CD8-positive, alpha-beta T cell (primary cell): ENCODE measurements at regions of chr9 and their contacts with region 1.

Region 1: GRCh38 chr9:136991993-136992818 is at the start of gene PAXX:
- DNase-seq: peak; percentile 84 to 96 (median 93)
- ATAC-seq: peak; percentile 82
- H3K4me3 ChIP-seq: peak within 1 kb of the TSS; percentile 79 to 84
- H3K4me3 Mint-ChIP-seq: peak within 1 kb of the TSS; percentile 88
- H3K27ac ChIP-seq: peak within 1 kb of the TSS; percentile 69 to 88
- H3K27ac Mint-ChIP-seq: peak within 1 kb of the TSS; percentile 95
- H3K4me1 ChIP-seq: peaks cover 35% of the 10 kb centered on the region
- H3K4me1 Mint-ChIP-seq: peaks cover 34% of the 10 kb centered on the region
- H3K27me3 ChIP-seq: no peaks in the 10 kb centered on the region
- H3K27me3 Mint-ChIP-seq: peaks cover 4% of the 10 kb centered on the region
- CTCF ChIP-seq: no peak
- total RNA-seq, gene PAXX: 101 to 111 TPM

Region 2: GRCh38 chr9:136849038-136849959 is 142.9 kb before region 1 on chr9 and contains the start of gene PHPT1:
- CTCF ChIA-PET with region 1: interaction called, 4 read pairs
- POLR2A ChIA-PET with region 1: no interaction called
- intact Hi-C with region 1: loop called (anchors 1 to 5 kb)
- DNase-seq: peak; percentile 91 to 98 (median 96)
- ATAC-seq: peak; percentile 92
- H3K4me3 ChIP-seq: peak within 1 kb of the TSS; percentile 77 to 99
- H3K4me3 Mint-ChIP-seq: peak within 1 kb of the TSS; percentile 93
- H3K27ac ChIP-seq: peak within 1 kb of the TSS; percentile 47 to 68
- H3K27ac Mint-ChIP-seq: peak within 1 kb of the TSS; percentile 88
- H3K4me1 ChIP-seq: peaks cover 29% of the 10 kb centered on the region
- H3K4me1 Mint-ChIP-seq: peaks cover 15% of the 10 kb centered on the region
- H3K27me3 ChIP-seq: peaks cover 3 to 11% of the 10 kb centered on the region in 2 experiments
- H3K27me3 Mint-ChIP-seq: peaks cover 9% of the 10 kb centered on the region
- CTCF ChIP-seq: no peak
- total RNA-seq, gene PHPT1: 15.7 to 17.1 TPM

Region 3: DNA sequence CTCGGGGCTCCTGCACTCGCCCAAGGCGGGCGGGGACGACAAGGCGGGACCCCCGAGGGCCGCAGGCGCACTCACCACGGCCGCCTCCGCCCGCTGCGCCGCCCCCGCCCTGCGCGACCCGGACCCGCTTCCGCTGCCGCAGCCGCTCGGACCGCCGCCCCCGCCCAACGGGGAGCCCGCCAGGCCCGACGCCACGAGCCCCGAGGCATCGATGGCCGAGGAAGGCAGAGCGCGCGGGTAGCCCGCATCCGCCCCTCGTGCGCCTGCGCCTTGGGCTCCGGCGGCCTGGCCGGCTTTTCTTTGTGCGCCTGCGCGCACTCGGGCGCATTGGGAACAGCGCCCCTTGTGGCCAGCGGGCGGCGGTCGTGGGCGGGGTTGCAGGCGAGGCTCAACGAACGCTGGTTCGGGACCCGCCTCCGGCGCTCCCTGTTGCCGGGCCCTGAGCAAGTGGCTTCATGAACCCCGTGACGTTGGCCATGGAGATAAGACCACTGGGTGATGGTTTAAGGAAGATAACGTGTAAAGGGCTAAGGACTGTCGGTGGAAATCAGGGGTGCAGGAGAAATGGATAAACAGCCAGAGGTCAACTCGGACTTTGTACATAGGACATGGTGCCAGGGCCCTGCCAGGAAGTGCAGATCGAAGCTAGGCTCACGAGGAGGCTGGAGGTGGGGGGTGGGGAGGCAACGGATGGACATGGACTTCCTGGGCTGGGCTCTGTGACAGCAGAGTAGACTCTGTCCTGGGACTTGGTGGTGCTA is 47.5 kb before region 1 on chr9 and contains the starts of genes C8G and FBXW5:
- CTCF ChIA-PET with region 1: interaction called, 10 read pairs
- POLR2A ChIA-PET with region 1: interaction called, 9 read pairs
- intact Hi-C with region 1: loop called in 1 of 2 experiments (anchors 1 kb)
- DNase-seq: peak; percentile 87 to 98 (median 93)
- ATAC-seq: peak; percentile 87
- H3K4me3 ChIP-seq: peak within 1 kb of the TSS; percentile 63 to 79
- H3K4me3 Mint-ChIP-seq: peak within 1 kb of the TSS; percentile 82
- H3K27ac ChIP-seq: peak within 1 kb of the TSS; percentile 28 to 48
- H3K27ac Mint-ChIP-seq: peak within 1 kb of the TSS; percentile 62
- H3K4me1 ChIP-seq: peaks cover 16% of the 10 kb centered on the region
- H3K4me1 Mint-ChIP-seq: peaks cover 12% of the 10 kb centered on the region
- H3K27me3 ChIP-seq: no peaks in the 10 kb centered on the region
- H3K27me3 Mint-ChIP-seq: no peaks in the 10 kb centered on the region
- CTCF ChIP-seq: peak; percentile 96
- total RNA-seq, gene C8G: not detected
- total RNA-seq, gene FBXW5: 38.4 to 39.5 TPM

Region 4: GRCh38 chr9:136960212-136960937 is 31.8 kb before region 1 on chr9:
- CTCF ChIA-PET with region 1: no interaction called
- POLR2A ChIA-PET with region 1: interaction called, 11 read pairs
- intact Hi-C with region 1: no loop called
- DNase-seq: peak in 6 of 9 experiments; percentile 49 to 80 (median 60)
- ATAC-seq: peak; percentile 60
- H3K4me3 ChIP-seq: no peak overlapping the region
- H3K4me3 Mint-ChIP-seq: peak overlapping the region; percentile 55
- H3K27ac ChIP-seq: peak overlapping the region; percentile 8 to 77
- H3K27ac Mint-ChIP-seq: peak overlapping the region; percentile 85
- H3K4me1 ChIP-seq: peaks cover 58% of the 10 kb centered on the region
- H3K4me1 Mint-ChIP-seq: peaks cover 41% of the 10 kb centered on the region
- H3K27me3 ChIP-seq: no peaks in the 10 kb centered on the region
- H3K27me3 Mint-ChIP-seq: no peaks in the 10 kb centered on the region
- CTCF ChIP-seq: no peak

Region 5: GRCh38 chr9:137021979-137022619 is 29.9 kb after region 1 on chr9:
- CTCF ChIA-PET with region 1: interaction called, 3 read pairs
- POLR2A ChIA-PET with region 1: interaction called, 3 read pairs
- intact Hi-C with region 1: loop called in 1 of 2 experiments (anchors 1 kb)
- DNase-seq: peak; percentile 33 to 87 (median 70)
- ATAC-seq: peak; percentile 92
- H3K4me3 ChIP-seq: no peak overlapping the region
- H3K4me3 Mint-ChIP-seq: no peak overlapping the region
- H3K27ac ChIP-seq: peak overlapping the region in 1 of 2 experiments; percentile 9
- H3K27ac Mint-ChIP-seq: no peak overlapping the region
- H3K4me1 ChIP-seq: peaks cover 18% of the 10 kb centered on the region
- H3K4me1 Mint-ChIP-seq: peaks cover 9% of the 10 kb centered on the region
- H3K27me3 ChIP-seq: no peaks in the 10 kb centered on the region
- H3K27me3 Mint-ChIP-seq: no peaks in the 10 kb centered on the region
- CTCF ChIP-seq: no peak

Region 6: GRCh38 chr9:137176302-137177182 is 184.3 kb after region 1 on chr9:
- CTCF ChIA-PET with region 1: no interaction called
- POLR2A ChIA-PET with region 1: no interaction called
- intact Hi-C with region 1: no loop called
- DNase-seq: peak in 3 of 9 experiments; percentile 23 to 55 (median 43)
- ATAC-seq: peak; percentile 61
- H3K4me3 ChIP-seq: no peak overlapping the region
- H3K4me3 Mint-ChIP-seq: no peak overlapping the region
- H3K27ac ChIP-seq: no peak overlapping the region
- H3K27ac Mint-ChIP-seq: no peak overlapping the region
- H3K4me1 ChIP-seq: peaks cover 8% of the 10 kb centered on the region
- H3K4me1 Mint-ChIP-seq: no peaks in the 10 kb centered on the region
- H3K27me3 ChIP-seq: peaks cover 0 to 7% of the 10 kb centered on the region in 2 experiments
- H3K27me3 Mint-ChIP-seq: no peaks in the 10 kb centered on the region
- CTCF ChIP-seq: peak; percentile 41